Mucosa of descending colon (tissue), 3 donors: ENCODE measurements at regions of chr17 and their contacts with region 1.

Region 1: GRCh38 chr17:59918975-59919530 is 26.1 kb downstream of the RPS6KB1 start:
- DNase-seq: no peak
- ATAC-seq: no peak
- H3K4me3 ChIP-seq: no peak overlapping the region
- H3K4me1 ChIP-seq: no peaks in the 10 kb centered on the region
- CTCF ChIP-seq: no peak

Region 2: DNA sequence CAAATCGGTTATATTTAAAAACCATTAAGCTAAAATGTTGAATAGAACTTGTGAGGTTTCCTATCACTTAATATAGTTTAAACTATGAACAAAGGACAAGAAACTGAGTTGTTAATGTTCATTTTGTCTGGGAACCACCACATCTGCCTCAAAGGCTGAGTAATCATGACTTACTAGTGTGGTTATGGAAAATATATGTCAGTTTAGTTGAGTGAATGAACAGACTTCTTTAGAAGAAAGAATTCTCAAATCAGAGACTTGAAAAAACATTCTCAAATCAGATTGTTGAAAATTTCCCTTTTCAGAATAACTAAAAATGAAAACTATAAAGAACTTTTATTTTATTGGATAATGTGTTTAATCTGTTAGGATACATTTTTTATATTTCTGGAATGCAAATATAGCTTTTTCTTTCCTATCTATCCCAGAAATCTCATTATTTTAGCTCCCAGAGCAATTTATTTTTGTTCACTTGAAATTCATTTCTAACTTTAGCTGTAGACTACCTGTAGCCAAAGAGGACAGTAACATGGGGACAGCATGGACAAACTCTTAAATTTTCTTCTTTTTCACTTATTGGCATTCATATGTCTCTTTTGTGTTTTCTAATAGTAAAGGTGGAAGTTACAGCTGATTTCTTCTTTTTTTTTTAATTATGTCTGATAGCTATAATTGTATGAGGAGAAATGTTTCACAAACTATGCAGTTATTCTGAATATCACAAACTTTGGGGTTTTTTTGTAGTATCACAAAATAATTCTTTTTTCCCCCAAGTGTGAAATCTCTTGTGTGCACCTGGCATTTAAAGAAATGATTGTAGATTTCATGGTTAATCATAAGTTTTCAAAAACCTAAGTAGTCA is 156.3 kb before region 1 on chr17:
- intact Hi-C with region 1: no loop called
- DNase-seq: no peak
- ATAC-seq: no peak
- H3K4me3 ChIP-seq: no peak overlapping the region
- H3K4me1 ChIP-seq: peaks cover 2% of the 10 kb centered on the region
- CTCF ChIP-seq: no peak

Region 3: DNA sequence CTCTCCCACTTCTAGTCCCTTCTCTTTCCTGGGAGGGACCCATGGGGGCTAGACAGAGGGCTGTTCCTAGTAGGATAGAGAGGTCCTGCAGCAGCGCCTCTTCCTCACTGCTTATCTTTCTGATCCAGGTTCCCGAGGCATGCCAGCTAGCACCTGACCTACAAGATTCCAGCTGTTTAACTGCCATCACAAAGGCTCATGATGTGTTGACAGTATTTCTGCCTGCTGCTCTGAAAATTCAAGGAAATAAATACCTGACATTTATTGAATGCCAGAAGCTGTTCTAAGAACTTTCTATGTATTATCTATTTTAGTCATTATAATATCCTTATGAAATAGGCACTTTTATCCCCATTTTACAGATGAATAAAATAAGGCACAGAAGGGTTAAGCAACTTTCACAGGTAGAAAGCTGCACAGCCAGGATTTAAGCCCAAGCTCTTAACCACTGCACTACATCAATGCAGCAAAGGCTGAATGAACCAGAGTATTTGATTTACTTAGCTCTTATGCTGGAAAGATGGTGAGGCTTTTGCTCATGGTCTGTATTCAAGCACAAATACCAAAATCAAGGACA is 120.9 kb after region 1 on chr17:
- intact Hi-C with region 1: loop called in 1 of 2 experiments (anchors 5 kb)
- DNase-seq: no peak
- ATAC-seq: no peak
- H3K4me3 ChIP-seq: no peak overlapping the region
- H3K4me1 ChIP-seq: no peaks in the 10 kb centered on the region
- CTCF ChIP-seq: no peak